Activated T-helper 2 cell treated with anti-CD3 and anti-CD28 coated beads, Interferon-gamma antibody, Interleukin-2, Interleukin-4, amounts not matched to agents 10 μg/mL and 5 μg/mL and 100 μg/mL, durations not matched to agents 14 hours and 24 hours and 36 hours (primary cell): ENCODE measurements at regions of chr13 and their contacts with region 1.

Region 1: DNA sequence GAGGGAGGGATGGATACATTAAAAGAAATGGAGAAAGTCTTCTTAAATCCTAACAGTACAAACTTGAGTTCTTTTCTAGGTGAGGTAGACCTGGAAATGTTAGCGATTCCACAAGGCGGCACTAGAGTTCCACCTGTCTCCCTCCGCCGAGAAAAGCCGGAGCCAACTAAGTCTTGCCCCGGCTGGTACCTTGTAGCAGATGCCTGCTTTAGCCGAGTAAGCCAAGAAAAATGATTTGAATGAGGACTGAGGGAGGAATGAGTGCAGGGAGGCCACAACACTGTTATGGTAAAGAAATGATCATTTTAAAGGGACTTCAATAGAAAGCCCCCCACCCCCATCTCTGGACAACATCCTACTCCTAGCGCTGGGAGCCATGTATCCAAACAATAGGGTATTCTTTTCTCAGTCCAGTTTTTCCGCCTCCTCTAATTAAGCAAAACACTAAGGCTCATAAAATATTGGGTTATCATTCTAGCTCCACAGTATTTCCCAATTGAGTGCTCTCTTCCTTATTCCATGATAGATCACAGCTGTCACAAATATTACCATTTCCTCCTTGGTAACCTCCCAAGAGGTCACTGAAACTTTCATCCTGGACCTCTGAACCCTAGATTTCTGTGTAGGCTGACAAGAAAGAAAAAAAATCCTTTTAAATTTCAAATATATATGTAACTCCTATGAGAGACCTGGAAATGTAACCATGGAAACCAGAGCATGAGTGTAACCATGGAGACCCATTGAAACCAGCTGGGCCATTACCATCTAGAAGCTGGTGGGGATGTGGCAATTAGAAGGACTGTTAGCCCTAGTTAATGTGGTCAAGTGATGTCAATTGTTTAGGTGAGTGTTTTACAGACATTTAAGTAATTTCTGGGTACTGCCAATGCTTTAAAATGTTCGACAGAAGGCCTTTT is 58.3 kb downstream of the GPALPP1 start:
- DNase-seq: peak; percentile 63
- H3K4me3 Mint-ChIP-seq: peak overlapping the region; percentile 72
- H3K27ac Mint-ChIP-seq: no peak overlapping the region
- H3K4me1 Mint-ChIP-seq: peaks cover 18% of the 10 kb centered on the region
- H3K27me3 Mint-ChIP-seq: peaks cover 56% of the 10 kb centered on the region

Region 2: DNA sequence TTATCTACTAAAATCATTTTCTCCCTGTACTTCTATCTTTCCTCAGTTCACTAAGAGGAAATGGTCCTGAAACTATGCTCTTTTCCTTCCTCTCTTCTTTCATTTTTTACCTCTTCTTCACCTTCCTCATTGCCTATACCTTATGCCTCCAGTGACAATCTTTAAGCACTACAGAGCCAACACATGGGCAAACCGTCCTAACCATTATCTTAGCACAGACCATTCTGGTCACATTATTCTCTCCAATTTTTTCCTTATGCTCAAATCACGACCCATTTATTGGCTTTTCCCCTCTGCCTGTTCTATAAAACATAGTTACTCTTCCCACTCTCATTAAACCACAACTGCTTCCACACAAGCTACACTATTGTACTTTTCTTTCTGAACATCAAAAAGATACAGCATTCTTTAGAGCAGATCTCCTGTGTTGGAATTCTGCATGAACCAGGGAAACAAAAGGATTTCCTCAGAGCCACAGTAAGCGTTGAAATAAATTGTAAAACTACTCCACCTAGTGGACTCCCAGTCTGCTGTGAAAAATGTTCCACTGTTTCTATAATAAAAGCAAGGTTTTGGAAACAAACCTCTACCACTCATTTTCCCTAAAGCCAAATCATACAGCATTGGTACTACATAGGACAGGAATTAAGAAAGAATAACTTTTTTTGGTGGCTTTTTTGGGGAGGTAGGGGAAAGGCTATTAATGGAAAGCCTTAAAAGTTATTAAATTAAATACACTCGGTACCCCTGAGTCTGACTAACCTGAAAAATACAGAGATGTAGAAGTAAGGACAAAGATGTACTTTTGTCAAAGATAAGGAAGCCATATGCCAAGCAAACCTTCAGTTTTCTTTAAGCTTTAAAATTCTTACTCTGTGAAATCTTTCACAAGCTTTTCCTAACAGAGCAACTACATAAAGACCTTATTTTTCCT is 77.8 kb before region 1 on chr13:
- intact Hi-C with region 1: no loop called
- DNase-seq: no peak
- H3K4me3 Mint-ChIP-seq: no peak overlapping the region
- H3K27ac Mint-ChIP-seq: no peak overlapping the region
- H3K4me1 Mint-ChIP-seq: peaks cover 8% of the 10 kb centered on the region
- H3K27me3 Mint-ChIP-seq: no peaks in the 10 kb centered on the region

Region 3: GRCh38 chr13:45119991-45120864 is 72.6 kb after region 1 on chr13 and contains the start of gene GTF2F2:
- intact Hi-C with region 1: loop called (anchors 2 kb)
- DNase-seq: peak; percentile 84
- H3K4me3 Mint-ChIP-seq: no peak within 1 kb of the TSS
- H3K27ac Mint-ChIP-seq: no peak within 1 kb of the TSS
- H3K4me1 Mint-ChIP-seq: peaks cover 8% of the 10 kb centered on the region
- H3K27me3 Mint-ChIP-seq: no peaks in the 10 kb centered on the region
- total RNA-seq, gene GTF2F2: 26.9 and 28.9 TPM in 2 replicates

Region 4: DNA sequence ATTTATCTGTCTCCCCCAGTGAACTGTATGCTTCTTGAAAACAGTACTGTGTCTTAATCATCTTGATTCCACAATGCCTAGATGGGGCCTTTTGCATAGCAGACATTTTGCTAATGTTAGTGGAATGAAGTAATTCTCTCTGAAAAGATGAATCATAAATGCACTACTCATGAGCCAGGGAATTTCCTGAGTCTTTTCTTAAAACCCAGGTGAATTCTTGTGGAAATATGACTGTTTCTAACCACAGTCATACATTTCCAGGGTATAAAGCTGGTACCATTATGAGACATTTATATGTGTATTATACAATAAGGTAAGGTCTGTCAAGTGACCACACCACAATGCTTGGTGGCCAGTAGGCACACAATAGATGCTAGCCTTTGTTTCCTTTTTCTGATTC is 158.7 kb after region 1 on chr13:
- intact Hi-C with region 1: loop called (anchors 5 kb)
- DNase-seq: no peak
- H3K4me3 Mint-ChIP-seq: no peak overlapping the region
- H3K27ac Mint-ChIP-seq: no peak overlapping the region
- H3K4me1 Mint-ChIP-seq: peaks cover 13% of the 10 kb centered on the region
- H3K27me3 Mint-ChIP-seq: no peaks in the 10 kb centered on the region

Region 5: DNA sequence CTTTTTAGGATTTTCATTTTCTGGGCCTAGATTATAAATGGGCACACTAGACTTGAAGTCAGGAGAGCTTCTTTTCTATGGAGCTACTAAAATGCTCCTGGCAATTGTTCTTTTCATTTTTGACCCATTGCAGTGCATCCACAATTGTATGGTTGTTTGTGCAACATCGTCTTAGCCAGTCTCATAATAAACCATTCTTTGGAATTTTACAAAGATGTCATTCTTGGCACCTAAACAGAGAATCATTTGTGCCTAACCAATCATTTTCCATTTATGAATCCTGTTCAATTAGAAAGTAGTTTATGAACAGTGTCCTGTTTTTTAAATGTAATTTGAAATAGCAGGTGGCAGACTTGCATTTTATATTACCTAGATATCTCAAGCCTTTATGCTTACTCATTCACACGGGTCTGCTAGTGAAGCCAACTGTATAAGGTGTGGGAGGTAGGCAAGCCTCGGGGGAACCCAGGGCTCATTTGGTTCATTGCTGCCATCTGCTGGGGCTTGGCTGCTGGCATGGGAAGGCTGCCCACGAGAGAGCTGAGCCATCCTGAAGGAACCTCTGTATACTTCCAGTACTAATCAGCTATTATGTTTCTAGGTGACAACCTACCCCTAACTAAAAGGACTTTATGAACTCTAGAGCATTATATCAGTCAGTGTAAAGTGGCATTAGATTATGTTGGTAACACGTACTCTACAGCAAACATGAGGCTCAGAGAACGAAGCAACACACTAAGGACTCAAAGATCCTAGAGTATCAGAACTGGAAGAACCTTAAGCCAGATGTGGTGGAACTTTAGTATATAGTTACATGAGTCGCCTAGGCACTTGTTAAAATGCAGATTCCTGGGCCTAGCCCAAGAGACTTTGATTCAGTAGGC is 233.3 kb after region 1 on chr13:
- intact Hi-C with region 1: loop called (anchors 1 kb)
- DNase-seq: peak; percentile 11
- H3K4me3 Mint-ChIP-seq: no peak overlapping the region
- H3K27ac Mint-ChIP-seq: no peak overlapping the region
- H3K4me1 Mint-ChIP-seq: no peaks in the 10 kb centered on the region
- H3K27me3 Mint-ChIP-seq: no peaks in the 10 kb centered on the region

Region 6: GRCh38 chr13:45310341-45311125 is 262.9 kb after region 1 on chr13:
- intact Hi-C with region 1: loop called (anchors 1 kb)
- DNase-seq: no peak
- H3K4me3 Mint-ChIP-seq: peak overlapping the region; percentile 78
- H3K27ac Mint-ChIP-seq: peak overlapping the region; percentile 0
- H3K4me1 Mint-ChIP-seq: peaks cover 16% of the 10 kb centered on the region
- H3K27me3 Mint-ChIP-seq: peaks cover 22% of the 10 kb centered on the region

Region 7: GRCh38 chr13:45393941-45394570 is 346.4 kb after region 1 on chr13:
- intact Hi-C with region 1: loop called (anchors 2 kb)
- DNase-seq: no peak
- H3K4me3 Mint-ChIP-seq: no peak overlapping the region
- H3K27ac Mint-ChIP-seq: no peak overlapping the region
- H3K4me1 Mint-ChIP-seq: peaks cover 36% of the 10 kb centered on the region
- H3K27me3 Mint-ChIP-seq: no peaks in the 10 kb centered on the region